ENCODE measurements at regions of chr18 and their contacts with region 1.

Region 1: GRCh38 chr18:62714671-62715435 is 488 bp upstream of the PHLPP1 start:
- DNase-seq: peak; percentile 99 to 100 (median 100)
- ATAC-seq: peak; percentile 93
- H3K4me3 ChIP-seq: peak overlapping the region; percentile 38 to 62
- H3K27ac ChIP-seq: peak overlapping the region; percentile 89 to 93
- H3K4me1 ChIP-seq: peaks cover 7 to 27% of the 10 kb centered on the region in 2 donors
- H3K27me3 ChIP-seq: no peaks in the 10 kb centered on the region
- CTCF ChIP-seq: peak; percentile 52 to 54

Region 2: GRCh38 chr18:62814132-62814759 is 99.4 kb after region 1 on chr18:
- intact Hi-C with region 1: no loop called
- DNase-seq: no peak
- ATAC-seq: no peak
- H3K4me3 ChIP-seq: no peak overlapping the region
- H3K27ac ChIP-seq: no peak overlapping the region
- H3K4me1 ChIP-seq: peaks cover 0 to 9% of the 10 kb centered on the region in 2 donors
- H3K27me3 ChIP-seq: no peaks in the 10 kb centered on the region
- CTCF ChIP-seq: no peak

Region 3: DNA sequence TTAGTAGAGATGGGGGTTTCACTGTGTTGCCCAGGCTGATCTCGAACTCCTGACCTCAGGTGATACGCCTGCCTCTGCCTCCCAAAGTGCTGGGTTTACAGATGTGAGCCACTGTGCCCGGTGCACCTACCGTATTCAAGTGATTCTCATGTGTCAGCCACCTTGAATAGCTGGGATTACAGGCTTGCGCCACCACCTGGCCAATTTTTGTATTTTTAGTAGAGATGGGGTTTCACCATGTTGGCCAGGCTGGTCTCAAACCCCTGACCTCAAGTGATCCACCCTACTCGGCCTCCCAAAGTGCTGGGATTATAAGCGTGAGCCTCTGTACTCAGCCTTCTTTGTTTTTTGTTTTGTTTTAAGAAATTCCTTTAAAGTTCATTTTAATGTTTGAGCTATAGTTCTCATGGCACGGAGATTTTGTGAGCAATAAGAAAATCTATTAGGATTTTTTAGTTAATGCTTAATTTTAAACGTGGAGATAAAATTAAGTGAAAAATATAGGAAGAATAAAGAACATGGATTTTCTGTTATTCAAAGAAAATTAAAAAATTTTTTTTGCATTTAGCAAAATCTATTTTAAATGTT is 243.1 kb after region 1 on chr18:
- intact Hi-C with region 1: loop called in 1 of 2 experiments (anchors 5 kb)
- DNase-seq: no peak
- ATAC-seq: peak; percentile 74
- H3K4me3 ChIP-seq: no peak overlapping the region
- H3K27ac ChIP-seq: no peak overlapping the region
- H3K4me1 ChIP-seq: peaks cover 0 to 17% of the 10 kb centered on the region in 2 donors
- H3K27me3 ChIP-seq: no peaks in the 10 kb centered on the region
- CTCF ChIP-seq: peak; percentile 26

Region 4: GRCh38 chr18:62982600-62983251 is 267.9 kb after region 1 on chr18:
- intact Hi-C with region 1: loop called in 1 of 2 experiments (anchors 10 kb)
- DNase-seq: peak in 2 of 4 donors; percentile 53 to 67
- ATAC-seq: peak; percentile 89
- H3K4me3 ChIP-seq: peak overlapping the region in 1 of 2 donors; percentile 31
- H3K27ac ChIP-seq: no peak overlapping the region
- H3K4me1 ChIP-seq: peaks cover 0 to 27% of the 10 kb centered on the region in 2 donors
- H3K27me3 ChIP-seq: no peaks in the 10 kb centered on the region
- CTCF ChIP-seq: peak; percentile 65 to 78